MCF 10A (cell line): ENCODE measurements at regions of chrX and their contacts with region 1.

Region 1: DNA sequence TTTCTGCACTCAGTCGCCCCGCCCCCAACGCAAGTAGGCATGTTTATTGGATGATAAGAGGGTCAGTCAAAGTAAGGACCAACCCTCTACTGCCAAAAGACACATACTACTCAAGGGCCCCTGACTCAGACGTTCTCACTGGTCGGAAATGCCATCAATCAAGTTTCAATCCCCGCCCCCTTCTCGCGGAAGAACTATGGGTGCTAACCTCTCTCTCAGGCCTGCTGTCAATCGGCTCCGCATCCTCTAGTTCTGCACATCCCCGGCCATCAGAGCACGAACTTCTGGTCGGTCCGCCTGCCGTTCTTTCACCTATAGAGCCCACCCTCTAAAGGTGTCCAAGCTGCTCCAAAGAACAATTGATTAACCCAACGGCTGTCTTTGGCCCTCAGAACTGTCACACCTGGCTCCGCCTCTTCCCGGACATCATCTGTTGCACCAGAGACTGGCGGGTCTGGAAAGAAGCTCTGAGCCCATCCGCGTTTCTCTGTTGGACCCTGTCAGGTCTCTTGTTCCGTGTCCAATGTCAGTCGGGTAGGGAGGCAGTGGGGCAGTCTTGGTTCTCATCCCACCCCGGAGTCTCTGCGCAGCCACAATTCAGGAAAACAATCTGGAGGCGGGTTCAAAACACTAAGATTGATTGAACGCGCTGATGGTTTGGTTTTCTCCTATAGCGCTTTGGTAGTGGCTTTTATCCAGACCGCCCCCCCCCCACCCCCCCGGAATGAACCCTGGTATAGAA is 15.2 kb downstream of the NDUFB11 start:
- DNase-seq: peak; percentile 95
- H3K4me3 Mint-ChIP-seq: peak overlapping the region; percentile 98
- H3K27ac Mint-ChIP-seq: peak overlapping the region; percentile 97
- H3K4me1 Mint-ChIP-seq: no peaks in the 10 kb centered on the region
- H3K27me3 Mint-ChIP-seq: peaks cover 27% of the 10 kb centered on the region
- CTCF ChIP-seq: no peak

Region 2: DNA sequence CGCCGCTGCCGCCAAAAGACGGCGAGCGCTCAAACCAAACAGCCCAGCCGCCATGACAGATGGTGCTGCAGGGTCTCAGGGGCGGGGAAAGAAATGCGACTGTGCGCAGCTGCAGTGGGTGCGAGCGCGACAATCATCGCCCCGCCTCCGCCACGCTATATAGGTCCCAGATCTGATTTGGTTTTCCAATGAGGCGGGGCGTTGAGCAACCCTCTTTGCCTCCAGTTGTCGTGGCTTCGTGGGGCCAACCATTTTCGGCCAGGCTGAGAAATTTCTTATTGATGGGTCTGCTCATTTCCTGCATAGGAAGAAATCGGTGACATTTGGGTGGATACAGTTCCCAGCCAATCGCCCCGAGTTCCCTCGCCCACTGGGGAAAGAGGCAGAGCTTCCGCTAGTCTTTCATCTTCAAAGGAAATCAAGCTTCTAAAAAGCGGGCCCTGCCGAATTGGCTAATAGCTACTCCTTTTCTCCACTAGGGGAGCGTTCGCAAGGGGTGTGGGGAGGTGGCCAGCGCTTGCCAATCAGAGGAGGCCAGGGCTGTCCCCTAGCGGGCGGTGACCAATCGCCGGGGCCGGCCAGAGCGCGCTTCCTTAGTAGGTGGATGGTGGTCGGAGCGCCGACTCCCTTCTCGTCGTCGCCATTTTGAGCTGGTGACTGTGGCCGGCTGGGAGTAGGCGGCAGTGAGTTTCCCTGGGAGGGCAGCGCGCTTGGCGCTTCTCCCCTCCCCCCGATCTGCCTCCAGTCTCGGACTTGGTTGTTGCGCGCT is 15.5 kb after region 1 on chrX and contains the starts of genes NDUFB11 and RBM10:
- CTCF ChIA-PET with region 1: interaction called, 9 read pairs
- POLR2A ChIA-PET with region 1: interaction called, 42 read pairs
- intact Hi-C with region 1: no loop called
- DNase-seq: peak; percentile 93
- H3K4me3 Mint-ChIP-seq: peak within 1 kb of the TSS; percentile 98
- H3K27ac Mint-ChIP-seq: peak within 1 kb of the TSS; percentile 98
- H3K4me1 Mint-ChIP-seq: peaks cover 10% of the 10 kb centered on the region
- H3K27me3 Mint-ChIP-seq: peaks cover 59% of the 10 kb centered on the region
- CTCF ChIP-seq: peak; percentile 27
- total RNA-seq, gene NDUFB11: 91.8 and 98.5 TPM in 2 replicates
- total RNA-seq, gene RBM10: 63.3 and 69.5 TPM in 2 replicates

Region 3: DNA sequence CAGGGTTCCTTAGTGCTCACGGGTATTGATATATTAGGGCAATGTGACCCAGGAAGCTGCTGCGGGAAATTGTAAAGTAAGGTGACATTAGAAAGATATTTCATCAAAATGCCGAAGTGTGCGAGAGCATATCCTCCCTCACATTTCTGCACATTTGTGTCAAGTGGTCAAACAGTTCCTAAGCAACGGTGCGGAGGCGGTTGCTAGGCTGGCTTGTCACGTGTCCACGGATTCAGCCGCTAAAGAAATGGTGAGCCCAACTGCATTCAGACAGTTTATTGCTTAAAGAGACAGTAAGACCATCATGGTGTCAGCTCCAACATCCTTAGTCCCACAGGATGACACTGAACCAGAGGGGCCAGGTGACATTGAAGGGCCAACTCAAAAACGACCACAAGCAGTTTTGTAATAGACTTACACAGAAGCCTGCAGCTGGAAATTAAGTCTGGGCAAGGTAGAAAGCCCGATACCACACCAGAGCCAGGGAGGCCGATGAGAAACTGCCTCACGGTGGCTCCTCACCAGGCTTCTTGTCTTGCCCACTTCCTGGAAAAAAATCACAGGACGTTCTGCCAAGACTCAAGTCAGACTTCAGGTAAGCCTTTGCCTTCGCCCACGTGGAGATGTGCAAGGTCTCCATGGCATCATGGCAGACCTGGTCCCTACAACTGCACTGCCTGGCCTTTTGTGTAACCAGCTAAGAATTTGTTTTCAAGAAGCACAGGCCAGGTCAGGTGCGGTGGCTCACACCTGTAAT is 153.9 kb after region 1 on chrX:
- CTCF ChIA-PET with region 1: no interaction called
- POLR2A ChIA-PET with region 1: no interaction called
- intact Hi-C with region 1: no loop called
- DNase-seq: no peak
- H3K4me3 Mint-ChIP-seq: no peak overlapping the region
- H3K27ac Mint-ChIP-seq: no peak overlapping the region
- H3K4me1 Mint-ChIP-seq: no peaks in the 10 kb centered on the region
- H3K27me3 Mint-ChIP-seq: peaks cover 28% of the 10 kb centered on the region
- CTCF ChIP-seq: no peak

Region 4: DNA sequence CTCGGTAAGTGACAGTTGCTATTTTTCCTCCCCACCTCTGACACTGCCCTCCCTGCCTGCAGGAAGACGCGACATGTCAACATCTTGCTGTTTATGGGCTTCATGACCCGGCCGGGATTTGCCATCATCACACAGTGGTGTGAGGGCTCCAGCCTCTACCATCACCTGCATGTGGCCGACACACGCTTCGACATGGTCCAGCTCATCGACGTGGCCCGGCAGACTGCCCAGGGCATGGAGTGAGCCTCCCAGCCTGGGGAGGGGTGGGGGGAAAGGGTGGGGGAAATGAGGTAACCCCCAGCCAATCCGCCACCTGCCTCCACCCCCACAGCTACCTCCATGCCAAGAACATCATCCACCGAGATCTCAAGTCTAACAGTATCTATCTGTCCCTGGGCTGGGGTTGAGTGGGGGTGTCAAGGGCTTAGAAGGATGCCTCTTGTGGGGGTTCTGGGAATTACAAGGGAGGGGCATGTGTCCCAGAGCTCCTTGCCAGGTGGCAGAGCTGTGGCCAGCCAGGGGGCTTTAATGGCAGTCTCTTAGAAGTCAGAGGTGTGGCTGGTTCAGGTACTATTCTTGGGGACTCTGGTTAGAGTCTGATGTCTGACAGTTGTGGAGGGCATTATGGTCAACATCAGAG is 439.4 kb after region 1 on chrX:
- CTCF ChIA-PET with region 1: no interaction called
- POLR2A ChIA-PET with region 1: no interaction called
- intact Hi-C with region 1: no loop called
- DNase-seq: no peak
- H3K4me3 Mint-ChIP-seq: no peak overlapping the region
- H3K27ac Mint-ChIP-seq: no peak overlapping the region
- H3K4me1 Mint-ChIP-seq: peaks cover 11% of the 10 kb centered on the region
- H3K27me3 Mint-ChIP-seq: no peaks in the 10 kb centered on the region
- CTCF ChIP-seq: peak; percentile 24